Activated T-helper 2 cell treated with anti-CD3 and anti-CD28 coated beads, Interferon-gamma antibody, Interleukin-2, Interleukin-4, amounts not matched to agents 10 μg/mL and 5 μg/mL and 100 μg/mL, durations not matched to agents 14 hours and 24 hours and 36 hours (primary cell): ENCODE measurements at regions of chr14 and their contacts with region 1.

Region 1: GRCh38 chr14:52325126-52325525 is 11.0 kb downstream of the PTGER2 start:
- DNase-seq: no peak
- H3K4me3 Mint-ChIP-seq: peak overlapping the region; percentile 37
- H3K27ac Mint-ChIP-seq: peak overlapping the region; percentile 73
- H3K4me1 Mint-ChIP-seq: peaks cover 81% of the 10 kb centered on the region
- H3K27me3 Mint-ChIP-seq: no peaks in the 10 kb centered on the region

Region 2: GRCh38 chr14:52279405-52279804 is 45.7 kb before region 1 on chr14:
- intact Hi-C with region 1: no loop called
- DNase-seq: no peak
- H3K4me3 Mint-ChIP-seq: no peak overlapping the region
- H3K27ac Mint-ChIP-seq: no peak overlapping the region
- H3K4me1 Mint-ChIP-seq: peaks cover 47% of the 10 kb centered on the region
- H3K27me3 Mint-ChIP-seq: peaks cover 8% of the 10 kb centered on the region

Region 3: GRCh38 chr14:52313903-52314594 is 11.1 kb before region 1 on chr14 and contains the start of gene PTGER2:
- intact Hi-C with region 1: loop called (anchors 1 kb)
- DNase-seq: peak; percentile 87
- H3K4me3 Mint-ChIP-seq: peak within 1 kb of the TSS; percentile 100
- H3K27ac Mint-ChIP-seq: peak within 1 kb of the TSS; percentile 98
- H3K4me1 Mint-ChIP-seq: peaks cover 59% of the 10 kb centered on the region
- H3K27me3 Mint-ChIP-seq: no peaks in the 10 kb centered on the region
- total RNA-seq, gene PTGER2: 53.3 and 54.1 TPM in 2 replicates

Region 4: GRCh38 chr14:52338051-52338681 is 13.0 kb after region 1 on chr14:
- intact Hi-C with region 1: loop called (anchors 1 kb)
- DNase-seq: no peak
- H3K4me3 Mint-ChIP-seq: no peak overlapping the region
- H3K27ac Mint-ChIP-seq: no peak overlapping the region
- H3K4me1 Mint-ChIP-seq: peaks cover 39% of the 10 kb centered on the region
- H3K27me3 Mint-ChIP-seq: no peaks in the 10 kb centered on the region

Region 5: GRCh38 chr14:52413729-52414408 is 88.7 kb after region 1 on chr14:
- intact Hi-C with region 1: loop called (anchors 2 kb)
- DNase-seq: no peak
- H3K4me3 Mint-ChIP-seq: peak overlapping the region; percentile 67
- H3K27ac Mint-ChIP-seq: peak overlapping the region; percentile 97
- H3K4me1 Mint-ChIP-seq: peaks cover 66% of the 10 kb centered on the region
- H3K27me3 Mint-ChIP-seq: no peaks in the 10 kb centered on the region

Region 6: DNA sequence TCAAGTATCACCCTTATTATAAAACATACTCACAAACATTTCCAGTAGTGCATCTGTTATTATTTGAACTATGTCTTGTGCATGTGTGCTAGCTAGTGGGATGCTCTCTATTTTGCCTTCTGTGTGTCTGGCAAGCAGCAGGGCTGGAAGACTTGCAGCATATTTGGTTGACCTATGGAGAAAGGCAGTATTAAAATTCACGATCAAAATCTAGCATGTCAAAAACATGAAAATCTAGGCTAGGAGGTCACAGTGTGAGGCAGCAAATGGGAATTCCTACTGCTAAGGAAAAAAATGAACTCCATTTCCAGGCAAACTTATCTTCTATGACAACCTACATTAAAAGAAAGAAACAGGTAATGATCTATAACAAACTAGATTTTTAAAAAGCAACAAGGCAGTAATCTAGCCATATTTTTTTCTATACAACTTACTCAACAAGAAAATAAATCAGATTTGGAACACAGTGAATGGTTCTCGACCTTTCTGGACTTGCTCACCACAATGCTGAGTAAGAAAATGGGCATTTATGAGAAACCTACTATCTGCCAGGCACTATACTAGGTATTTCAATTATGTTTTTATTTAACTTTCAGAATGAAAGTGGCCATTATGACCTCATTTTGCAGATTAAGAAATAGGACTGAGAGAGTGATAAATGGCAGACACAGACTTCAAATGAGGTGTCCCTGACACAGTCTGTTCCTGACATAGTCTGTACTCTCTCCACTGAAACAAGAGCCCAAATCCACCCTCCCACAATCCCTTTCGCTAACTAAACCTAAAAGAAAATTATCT is 130.4 kb after region 1 on chr14:
- intact Hi-C with region 1: loop called (anchors 2 kb)
- DNase-seq: no peak
- H3K4me3 Mint-ChIP-seq: no peak overlapping the region
- H3K27ac Mint-ChIP-seq: no peak overlapping the region
- H3K4me1 Mint-ChIP-seq: peaks cover 19% of the 10 kb centered on the region
- H3K27me3 Mint-ChIP-seq: no peaks in the 10 kb centered on the region

Region 7: GRCh38 chr14:52473557-52473956 is 148.4 kb after region 1 on chr14:
- intact Hi-C with region 1: no loop called
- DNase-seq: no peak
- H3K4me3 Mint-ChIP-seq: no peak overlapping the region
- H3K27ac Mint-ChIP-seq: no peak overlapping the region
- H3K4me1 Mint-ChIP-seq: peaks cover 26% of the 10 kb centered on the region
- H3K27me3 Mint-ChIP-seq: no peaks in the 10 kb centered on the region